Astrocyte of the cerebellum (primary cell): ENCODE measurements at regions of chr4 and their contacts with region 1.

Region 1: DNA sequence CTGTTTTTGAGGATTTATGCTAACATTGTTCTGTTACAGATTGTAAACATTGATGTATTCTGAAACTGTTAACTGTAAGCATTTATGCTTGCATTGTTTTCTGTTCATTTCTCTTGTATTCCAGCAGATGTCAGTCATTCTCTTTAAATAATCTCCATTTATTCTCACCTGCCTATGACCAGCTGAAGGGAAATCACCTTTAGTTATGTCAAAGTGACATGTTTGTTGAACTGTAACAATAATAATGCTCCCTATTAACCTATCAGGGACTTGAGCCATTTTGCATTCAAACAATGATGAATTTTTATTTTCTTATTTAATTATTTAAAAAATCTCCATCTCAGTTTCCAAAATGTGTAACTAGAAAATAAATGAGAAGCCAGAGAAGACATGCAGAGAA is 58.0 kb downstream of the SPCS3 start:
- DNase-seq: no peak
- H3K4me3 ChIP-seq: no peak overlapping the region
- CTCF ChIP-seq: peak; percentile 26

Region 2: DNA sequence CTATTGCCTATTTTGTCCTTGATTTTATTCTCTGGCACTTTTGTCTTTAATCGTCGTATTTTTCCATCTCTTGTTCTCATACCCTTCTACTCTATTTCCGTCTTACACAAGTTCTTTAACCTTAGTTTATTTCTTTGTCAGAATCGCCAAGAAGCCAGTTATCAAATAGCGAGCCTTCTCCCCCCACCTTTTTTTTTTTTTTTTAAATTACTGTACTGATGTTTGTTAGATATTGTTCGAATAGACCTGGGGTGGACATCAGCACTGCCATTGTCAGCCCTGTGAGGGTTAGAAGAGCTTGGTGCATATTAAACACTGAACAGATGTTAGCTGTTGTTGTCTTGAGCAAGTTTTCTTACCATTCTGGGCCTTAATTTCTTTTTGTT is 56.8 kb before region 1 on chr4:
- in situ Hi-C with region 1: no loop called
- DNase-seq: no peak
- H3K4me3 ChIP-seq: peak overlapping the region; percentile 56
- CTCF ChIP-seq: no peak

Region 3: DNA sequence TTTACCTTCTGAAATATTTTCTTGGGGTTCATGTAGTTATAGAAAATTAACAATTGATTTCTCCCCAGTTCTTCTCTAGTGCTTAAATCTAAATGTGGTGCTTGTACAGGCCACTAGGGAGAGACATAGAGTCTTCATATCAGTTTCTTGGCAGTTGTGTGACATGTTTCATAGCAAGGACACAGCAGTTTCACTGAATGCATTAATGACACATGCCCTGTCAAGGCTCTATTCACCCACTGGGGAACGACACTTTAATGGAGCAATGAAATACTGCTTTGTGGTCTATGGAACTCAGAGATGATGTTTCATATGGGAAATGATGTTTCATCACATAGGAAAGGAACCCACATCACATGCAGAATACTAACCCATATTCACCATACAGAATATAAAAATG is 412.2 kb after region 1 on chr4:
- in situ Hi-C with region 1: loop called (anchors 25 kb)
- DNase-seq: no peak
- H3K4me3 ChIP-seq: peak overlapping the region; percentile 81
- CTCF ChIP-seq: peak; percentile 73

Region 4: GRCh38 chr4:177339477-177340374 is 961.9 kb after region 1 on chr4:
- in situ Hi-C with region 1: loop called (anchors 5 kb)
- DNase-seq: peak; percentile 18
- H3K4me3 ChIP-seq: no peak overlapping the region
- CTCF ChIP-seq: peak; percentile 51